ENCODE measurements at regions of chr10 and their contacts with region 1.

Region 1: GRCh38 chr10:115355162-115355760 is 262.1 kb downstream of the ATRNL1 start:
- DNase-seq: no peak
- H3K4me3 ChIP-seq: no peak overlapping the region
- CTCF ChIP-seq: no peak
- POLR2A ChIP-seq: no peak

Region 2: DNA sequence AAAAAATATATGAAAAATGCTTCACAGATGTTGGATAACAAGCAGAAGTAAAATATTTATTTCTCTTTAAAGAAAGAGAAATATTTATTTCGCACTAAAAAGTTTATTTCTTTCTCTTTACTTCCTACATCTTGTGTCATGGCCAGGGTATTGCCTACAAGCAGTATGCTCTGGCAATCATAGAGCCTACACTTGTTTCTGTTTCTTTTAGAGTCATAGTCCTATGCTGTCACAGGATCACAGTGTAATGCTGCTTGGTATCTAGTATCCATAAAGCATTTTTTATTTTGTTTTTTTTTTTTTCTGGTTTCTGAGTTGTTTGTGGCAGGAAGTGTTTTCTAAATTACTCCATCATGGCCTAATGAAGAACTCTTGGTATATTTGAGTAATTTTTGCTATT is 146.1 kb before region 1 on chr10:
- intact Hi-C with region 1: no loop called
- DNase-seq: no peak
- H3K4me3 ChIP-seq: no peak overlapping the region
- CTCF ChIP-seq: no peak
- POLR2A ChIP-seq: no peak

Region 3: GRCh38 chr10:116278846-116279245 is 923.6 kb after region 1 on chr10:
- intact Hi-C with region 1: loop called (anchors 5 kb)
- DNase-seq: no peak
- H3K4me3 ChIP-seq: no peak overlapping the region
- CTCF ChIP-seq: no peak
- POLR2A ChIP-seq: no peak

Measured in lower leg skin (tissue), 4 donors.